Left ventricle myocardium superior (tissue), 1 donor: ENCODE measurements at regions of chr13 and their contacts with region 1.

Region 1: DNA sequence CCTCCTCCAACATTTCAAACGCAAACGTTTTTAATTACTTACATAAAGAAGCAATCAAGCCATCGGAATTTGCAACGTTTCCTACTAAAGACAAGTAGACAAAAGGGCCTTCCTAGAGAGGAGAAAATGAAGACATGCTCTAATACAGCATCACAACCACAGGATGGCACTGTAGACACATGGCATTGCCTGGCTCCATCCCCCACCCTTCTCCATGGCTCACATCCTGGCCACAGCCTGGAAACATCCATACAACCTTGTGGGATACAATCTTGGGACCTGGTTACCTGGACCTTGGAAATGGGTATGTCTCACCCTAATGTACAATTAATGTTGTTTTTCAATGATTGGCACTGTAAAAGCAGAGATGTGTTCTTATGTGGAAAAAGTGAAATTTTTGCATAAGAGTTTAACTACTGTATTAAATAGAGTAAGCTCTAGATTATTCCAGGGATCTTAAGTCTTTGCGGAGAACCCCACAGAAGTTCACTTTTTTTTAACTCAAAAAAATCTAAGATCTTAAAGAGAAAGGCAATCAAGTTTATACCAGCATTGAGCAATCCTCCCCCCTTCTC is 21.5 kb downstream of the EBPL start:
- DNase-seq: peak; percentile 42
- ATAC-seq: peak; percentile 92

Region 2: DNA sequence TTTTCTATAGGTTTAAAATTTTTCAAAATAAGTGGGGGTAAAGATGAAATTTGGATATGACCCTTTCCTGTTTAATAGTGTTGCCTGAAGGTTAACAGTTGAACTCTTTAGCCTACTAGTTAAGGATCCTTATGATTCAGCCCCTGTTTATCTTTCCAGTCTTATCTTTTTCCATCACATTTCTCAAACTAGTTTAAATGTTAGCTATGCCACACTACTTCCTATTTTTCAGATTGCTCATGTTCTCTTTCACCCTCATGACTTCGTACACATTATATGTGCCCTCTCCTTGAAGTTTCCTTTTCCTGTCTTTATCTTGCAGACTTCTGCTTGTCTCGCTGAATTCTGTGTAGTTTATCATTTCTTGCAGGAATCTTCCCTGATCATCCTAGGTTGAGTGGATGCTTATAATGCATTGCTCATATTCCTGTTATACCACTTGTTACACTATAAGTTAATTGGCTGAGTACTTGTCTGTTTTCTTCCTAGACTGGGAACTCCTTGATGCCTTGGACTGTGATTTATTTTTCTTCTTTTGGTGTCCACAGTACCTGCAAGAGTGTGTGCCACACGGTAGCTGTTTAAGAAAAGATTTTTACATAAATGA is 607.4 kb before region 1 on chr13:
- intact Hi-C with region 1: no loop called
- DNase-seq: no peak
- ATAC-seq: no peak

Region 3: DNA sequence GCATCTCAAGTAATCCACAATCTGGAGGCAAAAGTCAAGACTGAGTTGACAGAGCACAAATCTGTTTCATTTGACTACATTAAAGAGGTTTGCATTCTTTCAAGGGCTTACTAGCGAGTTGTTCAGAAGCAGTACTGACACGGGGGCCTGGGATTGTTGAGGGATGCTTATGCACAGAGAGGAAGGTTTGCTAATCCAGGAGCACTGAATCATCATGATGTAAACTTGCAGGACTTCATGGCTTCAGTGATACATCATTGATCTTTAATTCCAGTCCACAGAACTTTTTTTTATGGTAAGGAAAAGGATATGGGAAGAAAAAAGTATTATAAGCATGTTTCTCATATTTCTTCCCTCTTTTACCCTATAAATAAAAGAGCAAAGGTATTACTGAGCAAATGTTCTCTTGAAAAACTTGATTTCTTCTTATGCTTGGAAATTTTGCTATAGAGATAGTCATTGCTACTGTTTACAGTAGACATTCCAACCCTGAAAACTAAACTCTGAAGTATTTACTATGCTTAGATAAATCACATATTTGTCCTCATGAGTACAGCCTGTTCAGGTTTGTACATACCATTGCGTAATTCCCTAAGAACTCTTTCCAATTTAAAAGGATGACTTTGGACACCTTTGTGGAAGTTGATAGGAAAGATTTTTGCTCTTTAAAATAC is 188.5 kb after region 1 on chr13:
- intact Hi-C with region 1: loop called (anchors 10 kb)
- DNase-seq: no peak
- ATAC-seq: peak; percentile 53